ENCODE measurements at regions of chr7 and their contacts with region 1.

Region 1: GRCh38 chr7:140564643-140565042 is 76.0 kb downstream of the DENND2A start:
- DNase-seq: no peak
- ATAC-seq: peak; percentile 84
- H3K4me3 ChIP-seq: no peak overlapping the region
- H3K27ac ChIP-seq: no peak overlapping the region
- H3K4me1 ChIP-seq: peaks cover 12% of the 10 kb centered on the region
- H3K27me3 ChIP-seq: no peaks in the 10 kb centered on the region
- CTCF ChIP-seq: no peak

Region 2: GRCh38 chr7:140631602-140632001 is 67.0 kb after region 1 on chr7:
- CTCF ChIA-PET with region 1: interaction called, 10 read pairs
- POLR2A ChIA-PET with region 1: no interaction called
- in situ Hi-C with region 1: no loop called
- intact Hi-C with region 1: no loop called
- DNase-seq: no peak
- ATAC-seq: no peak
- H3K4me3 ChIP-seq: no peak overlapping the region
- H3K27ac ChIP-seq: no peak overlapping the region
- H3K4me1 ChIP-seq: no peaks in the 10 kb centered on the region; the same call in 1 of the 2 replicates
- H3K27me3 ChIP-seq: no peaks in the 10 kb centered on the region
- CTCF ChIP-seq: no peak

Measured in Panc1 (cell line).